Aorta (tissue), 5 donors: ENCODE measurements at regions of chr4 and their contacts with region 1.

Region 1: GRCh38 chr4:22515145-22515887 is 550 bp downstream of the ADGRA3 start:
- DNase-seq: peak; percentile 70 to 86
- ATAC-seq: peak; percentile 77
- H3K4me3 ChIP-seq: peak overlapping the region; percentile 70 to 88
- H3K27ac ChIP-seq: peak overlapping the region; percentile 30 to 63
- H3K4me1 ChIP-seq: peaks cover 0 to 2% of the 10 kb centered on the region in 2 donors
- H3K27me3 ChIP-seq: no peaks in the 10 kb centered on the region

Region 2: GRCh38 chr4:22416403-22416802 is 98.9 kb before region 1 on chr4:
- intact Hi-C with region 1: loop called in 1 of 2 experiments (anchors 5 kb)
- DNase-seq: no peak
- ATAC-seq: no peak
- H3K4me3 ChIP-seq: no peak overlapping the region
- H3K27ac ChIP-seq: no peak overlapping the region
- H3K4me1 ChIP-seq: no peaks in the 10 kb centered on the region
- H3K27me3 ChIP-seq: no peaks in the 10 kb centered on the region

Region 3: DNA sequence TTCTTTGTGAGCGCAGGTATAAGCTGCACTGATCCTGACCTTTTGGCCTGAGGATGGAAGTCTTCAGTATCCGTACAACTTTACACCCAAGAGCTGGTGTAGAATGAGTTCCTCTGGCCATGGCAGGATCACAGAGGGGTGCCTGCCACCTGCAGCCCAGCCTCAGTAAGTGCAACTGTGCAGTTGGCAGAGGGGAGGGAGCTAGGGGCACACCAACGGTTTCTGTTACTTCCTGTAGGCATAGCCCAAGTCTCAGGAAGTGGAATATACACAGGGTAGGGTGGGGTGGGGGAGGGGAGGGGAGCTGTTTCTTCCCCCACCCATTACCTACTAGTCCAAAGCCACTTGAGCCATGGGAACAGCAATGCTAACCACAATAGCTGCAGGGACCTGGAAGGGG is 92.1 kb after region 1 on chr4:
- intact Hi-C with region 1: loop called in 1 of 2 experiments (anchors 10 kb)
- DNase-seq: peak in 1 of 2 donors; percentile 58
- ATAC-seq: peak; percentile 71
- H3K4me3 ChIP-seq: no peak overlapping the region
- H3K27ac ChIP-seq: no peak overlapping the region
- H3K4me1 ChIP-seq: no peaks in the 10 kb centered on the region
- H3K27me3 ChIP-seq: no peaks in the 10 kb centered on the region

Region 4: DNA sequence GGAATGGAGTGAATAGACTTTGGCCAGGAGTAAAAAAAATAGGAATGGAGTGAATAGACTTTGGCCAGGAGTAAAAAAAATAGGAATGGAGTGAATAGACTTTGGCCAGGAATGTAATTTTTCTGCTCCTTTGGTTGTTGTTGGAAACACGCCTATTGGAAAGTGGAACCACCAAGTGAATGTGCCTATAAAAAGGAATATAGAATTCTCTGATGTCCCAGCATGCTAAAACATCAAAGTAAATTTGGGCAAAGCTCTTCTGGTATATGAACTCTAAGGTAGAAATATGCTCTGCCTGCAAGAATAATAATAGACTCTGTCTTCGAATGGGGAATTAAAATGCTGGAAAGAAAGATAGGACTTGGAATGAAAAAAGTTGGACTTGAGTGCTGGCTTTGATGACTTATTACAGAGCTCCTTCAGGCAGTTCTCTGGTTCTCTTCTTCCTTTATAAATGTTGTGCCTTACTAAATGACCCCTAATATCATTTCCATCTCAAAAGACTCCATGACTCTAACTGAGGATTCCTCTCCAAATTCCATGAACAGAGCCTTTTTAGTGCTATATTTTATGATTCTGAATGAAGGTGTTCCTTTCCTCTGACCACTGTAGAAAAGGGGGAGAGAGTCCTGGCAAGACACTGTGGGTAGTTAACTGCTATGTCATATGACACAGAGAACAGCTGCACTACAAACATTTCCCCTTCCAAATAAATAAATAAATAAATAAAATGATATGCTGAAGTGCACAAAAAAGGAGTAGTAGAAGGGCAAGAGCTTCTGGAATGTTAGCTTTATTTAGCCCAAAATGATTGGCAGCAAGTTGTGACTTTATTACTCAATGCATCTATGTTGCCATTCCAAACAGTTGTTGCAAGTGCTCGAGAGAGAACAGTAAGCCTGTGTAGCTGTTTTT is 163.9 kb after region 1 on chr4:
- intact Hi-C with region 1: loop called (anchors 5 to 10 kb)
- DNase-seq: no peak
- ATAC-seq: peak; percentile 90
- H3K4me3 ChIP-seq: no peak overlapping the region
- H3K27ac ChIP-seq: no peak overlapping the region
- H3K4me1 ChIP-seq: no peaks in the 10 kb centered on the region
- H3K27me3 ChIP-seq: no peaks in the 10 kb centered on the region